ENCODE measurements at regions of chr9 and their contacts with region 1.

Region 1: GRCh38 chr9:125631391-125632085 is 75.5 kb downstream of the MAPKAP1 start:
- DNase-seq: peak; percentile 54
- H3K4me3 Mint-ChIP-seq: no peak overlapping the region
- H3K27ac Mint-ChIP-seq: peak overlapping the region; percentile 67
- H3K4me1 Mint-ChIP-seq: peaks cover 75% of the 10 kb centered on the region
- H3K27me3 Mint-ChIP-seq: no peaks in the 10 kb centered on the region

Region 2: DNA sequence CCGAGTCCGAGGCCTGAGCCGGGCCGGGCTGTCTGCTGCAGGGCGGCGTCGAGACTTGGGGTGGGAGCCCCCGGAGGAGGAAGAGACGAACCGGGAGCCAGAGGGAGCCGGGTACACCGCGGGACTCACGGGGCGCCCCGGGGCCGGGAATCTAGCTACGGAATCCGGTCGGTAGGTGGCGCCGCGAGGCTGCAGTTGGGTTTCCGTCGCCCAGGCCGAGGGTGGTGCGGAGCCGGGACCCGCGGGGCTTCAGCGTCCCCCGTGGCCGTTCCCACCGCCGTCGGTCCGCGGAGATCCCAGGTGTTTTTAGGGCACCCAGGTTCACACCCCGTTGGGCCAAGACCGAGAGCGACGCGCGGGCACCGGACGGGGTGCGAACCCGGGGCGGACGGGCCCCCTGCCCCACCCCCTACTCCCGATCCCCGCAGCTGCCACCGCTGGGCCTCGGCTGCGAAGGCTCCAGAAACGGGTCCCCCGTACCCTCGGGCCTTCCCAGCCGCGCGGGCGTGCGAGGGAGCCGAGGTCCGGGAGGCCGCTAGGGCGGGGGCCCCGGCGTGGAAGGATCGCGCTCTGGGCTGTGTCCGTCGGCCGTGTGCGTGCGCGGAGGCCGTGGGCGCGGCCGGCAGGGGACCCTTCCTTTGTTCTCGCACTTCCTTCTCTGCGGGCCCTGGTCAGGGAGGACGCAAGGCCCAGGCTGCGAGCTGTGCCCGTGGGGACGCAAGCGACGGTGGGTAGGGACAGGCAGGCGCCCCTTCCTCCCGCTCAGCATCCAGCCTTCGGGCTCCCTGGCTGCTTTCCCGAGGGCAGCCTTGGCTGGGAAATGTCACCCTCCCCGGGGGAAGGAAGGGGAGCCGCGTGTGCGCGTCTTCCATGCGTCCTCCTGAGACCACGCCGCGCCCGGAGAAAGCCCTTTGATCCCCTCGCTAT is 223.3 kb before region 1 on chr9:
- CTCF ChIA-PET with region 1: interaction called, 3 read pairs
- intact Hi-C with region 1: loop called (anchors 1 kb)
- DNase-seq: peak; percentile 83
- H3K4me3 Mint-ChIP-seq: peak overlapping the region; percentile 66
- H3K27ac Mint-ChIP-seq: no peak overlapping the region
- H3K4me1 Mint-ChIP-seq: peaks cover 9% of the 10 kb centered on the region
- H3K27me3 Mint-ChIP-seq: peaks cover 23% of the 10 kb centered on the region

Region 3: DNA sequence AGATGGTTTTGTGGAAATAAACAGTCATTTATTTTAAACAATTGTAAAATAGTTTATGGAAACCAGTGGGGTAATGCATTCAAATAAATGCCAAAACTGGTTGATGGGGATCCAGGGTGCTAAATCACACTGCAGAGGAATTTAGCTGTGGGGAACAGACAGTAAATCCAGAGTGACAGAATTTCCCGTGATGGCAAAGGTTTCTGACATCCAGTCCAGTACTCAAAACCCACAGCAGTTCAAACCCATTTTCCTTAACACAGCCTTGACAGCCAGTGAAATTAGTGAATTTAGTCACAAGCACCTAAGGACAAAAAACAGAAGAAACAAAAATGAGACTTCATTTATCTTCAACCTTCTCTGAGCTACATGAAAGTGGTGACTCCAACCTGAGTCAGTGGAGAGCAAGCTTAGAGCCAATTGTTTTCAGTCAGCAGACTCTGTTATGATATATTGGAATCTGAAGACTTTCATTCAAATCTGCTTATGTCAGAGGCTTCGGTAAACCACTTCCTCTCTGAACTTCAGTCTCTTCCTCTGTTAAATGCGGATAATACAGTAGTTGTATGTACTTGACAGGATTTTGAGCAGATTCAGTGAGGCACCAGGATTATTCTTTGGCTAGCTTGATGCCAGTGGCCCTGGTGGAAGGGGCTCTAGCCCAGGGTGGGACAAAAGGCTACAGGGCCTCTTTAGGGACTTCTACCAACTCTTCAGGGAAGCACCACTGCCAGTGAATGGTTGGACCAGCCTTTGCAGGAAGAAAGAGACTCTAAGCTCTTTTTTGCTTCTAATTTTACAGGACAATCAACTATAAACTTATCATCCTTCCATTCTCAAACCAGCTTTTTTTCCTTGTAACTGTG is 109.8 kb before region 1 on chr9:
- CTCF ChIA-PET with region 1: no interaction called
- intact Hi-C with region 1: loop called (anchors 1 kb)
- DNase-seq: peak; percentile 71
- H3K4me3 Mint-ChIP-seq: peak overlapping the region; percentile 23
- H3K27ac Mint-ChIP-seq: peak overlapping the region; percentile 86
- H3K4me1 Mint-ChIP-seq: peaks cover 46% of the 10 kb centered on the region
- H3K27me3 Mint-ChIP-seq: no peaks in the 10 kb centered on the region

Region 4: DNA sequence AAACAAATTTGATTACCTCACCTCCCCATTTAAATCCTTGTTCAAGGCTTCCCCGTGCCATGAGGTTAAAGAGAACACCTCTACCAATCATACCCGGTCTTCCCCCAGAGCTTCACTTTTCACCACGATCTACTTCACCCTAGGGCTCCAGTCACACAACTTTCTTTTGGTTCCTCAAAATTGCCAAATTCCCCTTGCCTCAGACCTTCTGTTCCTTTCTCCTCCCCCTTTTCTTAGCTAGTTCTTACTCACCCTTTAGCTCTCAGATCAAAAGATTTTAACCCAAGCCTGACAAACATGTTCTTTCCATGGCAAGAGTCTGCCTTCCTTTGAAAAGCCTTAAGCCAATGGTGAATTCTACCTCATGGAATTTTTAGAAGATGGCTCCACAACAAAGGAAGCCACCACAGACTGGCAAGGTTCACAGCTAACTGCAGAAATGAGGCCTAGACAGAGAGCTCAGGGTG is 18.8 kb after region 1 on chr9:
- CTCF ChIA-PET with region 1: interaction called, 7 read pairs
- intact Hi-C with region 1: loop called (anchors 1 kb)
- DNase-seq: peak; percentile 60
- H3K4me3 Mint-ChIP-seq: peak overlapping the region; percentile 14
- H3K27ac Mint-ChIP-seq: peak overlapping the region; percentile 51
- H3K4me1 Mint-ChIP-seq: peaks cover 81% of the 10 kb centered on the region
- H3K27me3 Mint-ChIP-seq: no peaks in the 10 kb centered on the region

Region 5: GRCh38 chr9:125700791-125701190 is 69.3 kb after region 1 on chr9:
- CTCF ChIA-PET with region 1: no interaction called
- intact Hi-C with region 1: loop called (anchors 1 kb)
- DNase-seq: peak; percentile 80
- H3K4me3 Mint-ChIP-seq: no peak overlapping the region
- H3K27ac Mint-ChIP-seq: peak overlapping the region; percentile 47
- H3K4me1 Mint-ChIP-seq: peaks cover 58% of the 10 kb centered on the region
- H3K27me3 Mint-ChIP-seq: no peaks in the 10 kb centered on the region

Region 6: DNA sequence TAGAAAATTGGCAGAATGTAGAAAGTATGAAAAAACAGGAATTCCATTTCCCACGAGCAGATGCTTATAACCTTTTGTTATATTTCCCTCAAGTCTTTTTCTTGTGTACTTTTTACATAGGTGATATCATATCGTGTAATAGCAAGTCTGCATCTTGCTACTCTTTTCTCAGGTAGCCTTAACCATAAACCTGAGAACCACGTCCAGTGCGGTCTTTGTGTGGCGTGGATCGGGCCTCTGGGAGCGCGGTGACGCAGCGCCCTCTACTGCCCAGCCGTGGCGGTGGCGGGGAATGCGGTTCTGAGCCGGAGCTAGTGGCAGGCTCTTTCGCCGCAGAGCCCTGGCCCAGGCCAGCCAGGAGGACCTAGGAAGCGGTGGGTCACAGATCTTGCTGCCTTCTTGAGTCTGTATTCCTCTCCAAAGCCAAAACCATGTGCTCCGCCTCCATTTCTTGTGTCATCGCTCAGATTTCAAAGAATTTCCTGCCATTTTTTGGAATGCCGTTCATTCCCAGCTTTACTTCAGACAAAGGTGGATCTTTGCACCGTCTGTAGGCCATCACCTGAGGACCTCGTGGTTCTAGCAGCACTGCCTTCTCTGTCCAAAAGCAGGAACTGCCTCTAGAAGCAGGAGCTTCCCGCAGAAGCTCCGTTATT is 767.0 kb after region 1 on chr9:
- CTCF ChIA-PET with region 1: no interaction called
- intact Hi-C with region 1: loop called (anchors 5 kb)
- DNase-seq: peak; percentile 82
- H3K4me3 Mint-ChIP-seq: no peak overlapping the region
- H3K27ac Mint-ChIP-seq: no peak overlapping the region
- H3K4me1 Mint-ChIP-seq: peaks cover 42% of the 10 kb centered on the region
- H3K27me3 Mint-ChIP-seq: no peaks in the 10 kb centered on the region

Region 7: GRCh38 chr9:126490871-126491567 is 859.5 kb after region 1 on chr9:
- CTCF ChIA-PET with region 1: no interaction called
- intact Hi-C with region 1: loop called (anchors 1 kb)
- DNase-seq: peak; percentile 72
- H3K4me3 Mint-ChIP-seq: no peak overlapping the region
- H3K27ac Mint-ChIP-seq: no peak overlapping the region
- H3K4me1 Mint-ChIP-seq: peaks cover 10% of the 10 kb centered on the region
- H3K27me3 Mint-ChIP-seq: peaks cover 2% of the 10 kb centered on the region

Measured in activated naive CD4-positive, alpha-beta T cell treated with anti-CD3 and anti-CD28 coated beads for 36 hours (primary cell).